Caco-2 (cell line): ENCODE measurements at regions of chr4 and their contacts with region 1.

Region 1: GRCh38 chr4:111283061-111283677 is 660.3 kb upstream of the PITX2 start:
- DNase-seq: peak; percentile 48 to 73
- H3K4me3 ChIP-seq: no peak overlapping the region
- H3K4me3 Mint-ChIP-seq: no peak overlapping the region
- H3K27ac Mint-ChIP-seq: no peak overlapping the region
- H3K4me1 ChIP-seq: no peaks in the 10 kb centered on the region
- H3K4me1 Mint-ChIP-seq: no peaks in the 10 kb centered on the region
- H3K27me3 ChIP-seq: no peaks in the 10 kb centered on the region
- H3K27me3 Mint-ChIP-seq: peaks cover 15% of the 10 kb centered on the region
- CTCF ChIP-seq: peak; percentile 83 to 85

Region 2: DNA sequence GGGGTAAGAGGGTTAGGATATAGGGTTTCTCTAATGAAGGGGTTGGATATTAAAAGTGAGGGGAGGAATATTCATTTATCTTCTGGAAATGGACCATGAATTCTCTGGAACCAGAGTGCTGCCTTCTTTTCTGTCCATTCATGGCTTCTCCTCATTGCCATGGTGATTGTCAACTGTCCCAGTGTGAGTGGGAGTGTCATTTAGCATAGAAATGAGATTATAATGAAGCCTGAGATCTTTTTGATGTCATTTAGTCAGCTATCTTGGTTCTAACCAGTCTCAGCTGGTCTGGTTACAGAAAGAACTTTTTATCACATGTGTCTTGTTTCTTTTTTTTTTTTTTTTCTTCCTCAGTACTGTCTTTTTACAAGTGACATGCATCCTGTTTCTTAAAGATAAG is 163.0 kb before region 1 on chr4:
- CTCF ChIA-PET with region 1: no interaction called
- POLR2A ChIA-PET with region 1: no interaction called
- intact Hi-C with region 1: no loop called
- DNase-seq: no peak
- H3K4me3 ChIP-seq: no peak overlapping the region
- H3K4me3 Mint-ChIP-seq: no peak overlapping the region
- H3K27ac Mint-ChIP-seq: no peak overlapping the region
- H3K4me1 ChIP-seq: no peaks in the 10 kb centered on the region
- H3K4me1 Mint-ChIP-seq: no peaks in the 10 kb centered on the region
- H3K27me3 ChIP-seq: no peaks in the 10 kb centered on the region
- H3K27me3 Mint-ChIP-seq: peaks cover 2% of the 10 kb centered on the region
- CTCF ChIP-seq: no peak

Region 3: GRCh38 chr4:111136438-111136837 is 146.7 kb before region 1 on chr4:
- CTCF ChIA-PET with region 1: interaction called, 4 read pairs
- POLR2A ChIA-PET with region 1: no interaction called
- intact Hi-C with region 1: loop called (anchors 1 kb)
- DNase-seq: peak in 1 of 2 experiments; percentile 29
- H3K4me3 ChIP-seq: no peak overlapping the region
- H3K4me3 Mint-ChIP-seq: no peak overlapping the region
- H3K27ac Mint-ChIP-seq: no peak overlapping the region
- H3K4me1 ChIP-seq: no peaks in the 10 kb centered on the region
- H3K4me1 Mint-ChIP-seq: no peaks in the 10 kb centered on the region
- H3K27me3 ChIP-seq: no peaks in the 10 kb centered on the region
- H3K27me3 Mint-ChIP-seq: peaks cover 1% of the 10 kb centered on the region
- CTCF ChIP-seq: peak in 1 of 2 experiments; percentile 33

Region 4: GRCh38 chr4:111216791-111217190 is 66.4 kb before region 1 on chr4:
- CTCF ChIA-PET with region 1: no interaction called
- POLR2A ChIA-PET with region 1: no interaction called
- intact Hi-C with region 1: loop called (anchors 5 kb)
- DNase-seq: no peak
- H3K4me3 ChIP-seq: no peak overlapping the region
- H3K4me3 Mint-ChIP-seq: no peak overlapping the region
- H3K27ac Mint-ChIP-seq: no peak overlapping the region
- H3K4me1 ChIP-seq: 0 out of 2 replicates have a peak, but pooled peaks cover 5% of the 10 kb centered on the region
- H3K4me1 Mint-ChIP-seq: no peaks in the 10 kb centered on the region
- H3K27me3 ChIP-seq: no peaks in the 10 kb centered on the region; the same call in 1 of the 2 replicates
- H3K27me3 Mint-ChIP-seq: no peaks in the 10 kb centered on the region
- CTCF ChIP-seq: no peak

Region 5: DNA sequence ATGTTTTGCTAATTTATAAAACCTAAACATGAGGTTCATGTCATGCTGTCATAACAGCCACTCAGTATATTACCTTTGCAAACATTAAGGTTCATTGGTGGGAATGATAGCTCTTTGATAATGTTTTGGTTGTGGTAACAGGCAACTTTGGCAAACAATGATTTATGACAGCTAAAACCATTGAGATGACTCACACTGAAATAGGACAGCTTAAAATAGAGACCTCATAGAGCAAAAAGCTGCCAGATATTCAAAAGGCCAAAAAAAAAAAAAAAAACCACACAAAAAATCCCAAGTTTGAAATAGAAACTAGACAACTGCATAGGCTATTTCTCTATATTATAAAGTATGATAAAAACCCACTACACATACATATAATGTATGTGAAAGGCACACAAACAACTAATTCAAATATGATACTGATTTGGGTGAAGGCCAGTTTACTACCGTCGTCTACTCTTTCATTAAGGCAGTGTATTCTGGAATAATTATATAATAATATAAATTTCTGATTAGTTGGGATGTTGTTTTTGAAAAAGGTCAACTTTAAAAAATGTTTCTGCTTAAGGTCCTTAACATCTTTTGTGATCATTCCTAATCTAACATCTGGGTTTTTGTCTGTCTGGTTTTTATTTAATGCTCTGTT is 14.3 kb before region 1 on chr4:
- CTCF ChIA-PET with region 1: no interaction called
- POLR2A ChIA-PET with region 1: no interaction called
- intact Hi-C with region 1: loop called (anchors 1 kb)
- DNase-seq: no peak
- H3K4me3 ChIP-seq: no peak overlapping the region
- H3K4me3 Mint-ChIP-seq: peak overlapping the region; percentile 63
- H3K27ac Mint-ChIP-seq: peak overlapping the region; percentile 90
- H3K4me1 ChIP-seq: peaks cover 20% of the 10 kb centered on the region
- H3K4me1 Mint-ChIP-seq: peaks cover 31% of the 10 kb centered on the region
- H3K27me3 ChIP-seq: no peaks in the 10 kb centered on the region
- H3K27me3 Mint-ChIP-seq: no peaks in the 10 kb centered on the region
- CTCF ChIP-seq: no peak

Region 6: GRCh38 chr4:111475001-111475400 is 191.8 kb after region 1 on chr4:
- CTCF ChIA-PET with region 1: no interaction called
- POLR2A ChIA-PET with region 1: no interaction called
- intact Hi-C with region 1: loop called (anchors 1 kb)
- DNase-seq: peak; percentile 50 to 62
- H3K4me3 ChIP-seq: no peak overlapping the region
- H3K4me3 Mint-ChIP-seq: no peak overlapping the region
- H3K27ac Mint-ChIP-seq: no peak overlapping the region
- H3K4me1 ChIP-seq: no peaks in the 10 kb centered on the region
- H3K4me1 Mint-ChIP-seq: no peaks in the 10 kb centered on the region
- H3K27me3 ChIP-seq: no peaks in the 10 kb centered on the region
- H3K27me3 Mint-ChIP-seq: no peaks in the 10 kb centered on the region
- CTCF ChIP-seq: peak; percentile 64 to 68

Region 7: GRCh38 chr4:111631215-111631999 is 348.2 kb after region 1 on chr4:
- CTCF ChIA-PET with region 1: no interaction called
- POLR2A ChIA-PET with region 1: no interaction called
- intact Hi-C with region 1: loop called (anchors 2 kb)
- DNase-seq: peak in 1 of 2 experiments; percentile 7
- H3K4me3 ChIP-seq: no peak overlapping the region
- H3K4me3 Mint-ChIP-seq: no peak overlapping the region
- H3K27ac Mint-ChIP-seq: no peak overlapping the region
- H3K4me1 ChIP-seq: no peaks in the 10 kb centered on the region
- H3K4me1 Mint-ChIP-seq: peaks cover under 1% of the 10 kb centered on the region
- H3K27me3 ChIP-seq: no peaks in the 10 kb centered on the region
- H3K27me3 Mint-ChIP-seq: peaks cover 9% of the 10 kb centered on the region
- CTCF ChIP-seq: peak; percentile 12 to 63